CD4-positive, alpha-beta T cell (primary cell): ENCODE measurements at regions of chr1 and their contacts with region 1.

Region 1: DNA sequence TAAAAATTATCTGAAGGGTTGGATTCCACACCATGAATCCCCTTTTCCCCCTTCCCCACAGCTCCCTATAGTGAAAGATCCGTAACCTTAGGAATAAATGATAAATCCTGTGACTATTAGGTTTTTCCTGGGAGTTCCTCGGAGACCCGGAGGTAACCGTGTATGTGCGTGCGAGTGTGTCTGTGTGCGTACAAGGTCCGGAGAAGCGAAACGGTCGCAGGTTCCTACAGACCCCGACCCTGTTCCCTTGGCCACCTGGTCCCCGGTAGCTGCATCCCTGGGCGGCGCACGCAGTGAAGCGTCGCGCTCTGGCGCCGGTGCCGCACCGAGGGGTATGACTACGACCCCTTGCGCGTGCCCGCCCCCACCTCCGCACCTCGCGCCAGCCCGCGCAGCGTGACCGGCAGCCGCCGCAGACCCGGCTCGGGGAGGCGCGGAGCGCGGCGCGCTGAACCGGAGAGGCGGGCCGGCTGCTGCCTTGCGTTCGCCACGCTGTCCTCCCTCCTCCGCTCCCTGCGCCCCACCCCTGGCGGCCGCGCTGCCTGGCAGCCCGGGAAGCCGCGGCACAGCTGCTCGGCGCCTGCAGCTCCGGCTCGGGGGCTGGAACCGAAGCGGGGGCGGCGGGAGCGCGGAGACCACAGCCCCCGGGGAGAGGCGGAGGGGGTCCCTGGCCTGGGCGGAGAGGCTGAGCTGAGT is at the start of gene AK5:
- DNase-seq: peak; percentile 13 to 71 (median 45)
- ATAC-seq: peak; percentile 73
- H3K4me3 ChIP-seq: peak within 1 kb of the TSS; percentile 69
- H3K4me3 Mint-ChIP-seq: peak within 1 kb of the TSS; percentile 88
- H3K27ac ChIP-seq: peak within 1 kb of the TSS in 1 of 2 donors; percentile 51
- H3K27ac Mint-ChIP-seq: peak within 1 kb of the TSS; percentile 62
- H3K4me1 ChIP-seq: peaks cover 33% of the 10 kb centered on the region
- H3K4me1 Mint-ChIP-seq: peaks cover 55% of the 10 kb centered on the region
- H3K27me3 ChIP-seq: peaks cover 0 to 11% of the 10 kb centered on the region in 2 experiments
- H3K27me3 Mint-ChIP-seq: no peaks in the 10 kb centered on the region
- CTCF ChIP-seq: no peak
- total RNA-seq, gene AK5: 32.0 TPM

Region 2: DNA sequence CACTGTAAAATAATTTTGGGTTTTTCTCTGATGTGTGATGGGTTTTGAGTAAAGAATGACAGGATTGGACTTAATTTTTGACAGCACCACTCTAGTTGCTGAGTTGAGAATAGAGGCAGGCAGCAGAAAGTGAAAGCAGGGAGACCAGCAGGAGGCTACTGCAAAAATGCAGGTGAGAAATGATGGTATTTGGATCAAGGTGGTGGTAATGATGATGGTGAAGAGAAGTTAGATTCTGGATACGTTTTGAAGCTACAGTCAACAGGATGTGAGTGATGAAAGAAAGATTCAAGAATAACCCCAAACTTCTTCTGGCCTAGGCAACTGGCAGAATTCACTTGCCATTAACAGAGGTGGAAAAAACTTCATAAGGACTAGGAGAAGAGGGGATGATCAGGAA is 14.6 kb before region 1 on chr1:
- CTCF ChIA-PET with region 1: interaction called, 3 read pairs
- POLR2A ChIA-PET with region 1: interaction called, 11 read pairs
- intact Hi-C with region 1: no loop called
- DNase-seq: peak in 1 of 14 experiments; percentile 23
- ATAC-seq: peak; percentile 73
- H3K4me3 ChIP-seq: no peak overlapping the region
- H3K4me3 Mint-ChIP-seq: no peak overlapping the region
- H3K27ac ChIP-seq: no peak overlapping the region
- H3K27ac Mint-ChIP-seq: no peak overlapping the region
- H3K4me1 ChIP-seq: no peaks in the 10 kb centered on the region
- H3K4me1 Mint-ChIP-seq: no peaks in the 10 kb centered on the region
- H3K27me3 ChIP-seq: no peaks in the 10 kb centered on the region
- H3K27me3 Mint-ChIP-seq: no peaks in the 10 kb centered on the region
- CTCF ChIP-seq: no peak

Region 3: DNA sequence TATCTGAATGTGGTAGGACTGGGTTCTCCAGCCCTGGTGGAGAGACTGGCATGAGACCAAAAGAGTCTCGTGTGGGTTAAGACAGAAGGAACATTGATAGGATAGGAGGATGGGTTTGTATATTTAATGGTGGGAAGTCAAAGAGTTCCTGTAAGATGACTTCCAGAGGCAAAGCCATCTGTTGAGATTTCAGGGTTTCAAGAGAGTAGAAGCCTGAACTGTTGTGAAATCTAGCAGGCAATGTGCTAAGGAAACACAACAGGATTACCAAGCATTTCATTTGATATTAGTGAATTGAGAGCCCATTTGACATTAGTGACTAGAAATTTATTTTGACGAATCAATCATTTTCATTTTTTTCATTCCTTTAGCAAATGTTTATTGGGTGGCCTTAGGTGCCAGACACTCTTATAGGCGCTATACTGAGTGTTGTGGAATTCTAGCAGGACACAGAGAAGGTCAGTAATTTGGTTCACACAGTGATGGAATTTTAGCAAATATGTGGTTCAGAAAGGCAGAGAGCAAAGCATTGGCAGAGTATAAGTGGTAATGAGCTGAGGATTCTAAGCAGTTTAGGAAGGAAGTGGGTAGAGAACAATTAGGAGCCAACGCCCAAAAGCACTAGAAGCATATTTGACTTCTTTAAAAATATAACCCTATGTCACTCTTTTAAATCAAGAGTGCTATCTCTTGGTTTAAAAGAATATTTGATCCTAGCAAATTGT is 149.5 kb after region 1 on chr1:
- CTCF ChIA-PET with region 1: no interaction called
- POLR2A ChIA-PET with region 1: interaction called, 20 read pairs
- intact Hi-C with region 1: loop called in 1 of 2 experiments (anchors 5 kb)
- DNase-seq: peak in 4 of 14 experiments; percentile 21 to 81 (median 62)
- ATAC-seq: peak; percentile 94
- H3K4me3 ChIP-seq: peak overlapping the region; percentile 19
- H3K4me3 Mint-ChIP-seq: no peak overlapping the region
- H3K27ac ChIP-seq: peak overlapping the region; percentile 62 to 83
- H3K27ac Mint-ChIP-seq: no peak overlapping the region
- H3K4me1 ChIP-seq: peaks cover 37% of the 10 kb centered on the region
- H3K4me1 Mint-ChIP-seq: peaks cover 18% of the 10 kb centered on the region
- H3K27me3 ChIP-seq: no peaks in the 10 kb centered on the region
- H3K27me3 Mint-ChIP-seq: no peaks in the 10 kb centered on the region
- CTCF ChIP-seq: no peak

Region 4: GRCh38 chr1:77557053-77557452 is 275.4 kb after region 1 on chr1:
- CTCF ChIA-PET with region 1: no interaction called
- POLR2A ChIA-PET with region 1: no interaction called
- intact Hi-C with region 1: no loop called
- DNase-seq: no peak
- ATAC-seq: no peak
- H3K4me3 ChIP-seq: no peak overlapping the region
- H3K4me3 Mint-ChIP-seq: no peak overlapping the region
- H3K27ac ChIP-seq: no peak overlapping the region
- H3K27ac Mint-ChIP-seq: no peak overlapping the region
- H3K4me1 ChIP-seq: no peaks in the 10 kb centered on the region
- H3K4me1 Mint-ChIP-seq: peaks cover 20% of the 10 kb centered on the region
- H3K27me3 ChIP-seq: no peaks in the 10 kb centered on the region
- H3K27me3 Mint-ChIP-seq: no peaks in the 10 kb centered on the region
- CTCF ChIP-seq: no peak

Region 5: DNA sequence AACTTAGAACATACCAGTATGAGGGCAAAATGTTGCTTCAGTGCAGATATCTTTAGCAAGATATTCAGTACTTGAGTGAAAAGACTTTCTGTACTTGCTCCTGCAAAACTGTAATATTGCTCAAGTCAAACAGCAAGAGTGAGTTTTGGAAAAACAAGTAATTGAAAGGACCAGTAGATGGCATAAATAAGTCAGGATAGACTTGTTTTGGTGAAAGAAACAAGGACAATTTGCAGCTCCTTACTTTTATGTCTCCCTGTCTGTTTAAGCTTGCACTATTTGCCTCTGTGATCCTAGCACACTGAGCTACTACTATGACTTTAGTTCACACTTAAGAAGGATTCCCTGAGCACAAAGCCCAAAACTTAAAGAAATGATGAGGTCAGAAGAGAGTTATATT is 1407.1 kb after region 1 on chr1:
- CTCF ChIA-PET with region 1: no interaction called
- POLR2A ChIA-PET with region 1: no interaction called
- intact Hi-C with region 1: no loop called
- DNase-seq: no peak
- ATAC-seq: no peak
- H3K4me3 ChIP-seq: no peak overlapping the region
- H3K4me3 Mint-ChIP-seq: no peak overlapping the region
- H3K27ac ChIP-seq: no peak overlapping the region
- H3K27ac Mint-ChIP-seq: no peak overlapping the region
- H3K4me1 ChIP-seq: no peaks in the 10 kb centered on the region
- H3K4me1 Mint-ChIP-seq: no peaks in the 10 kb centered on the region
- H3K27me3 ChIP-seq: no peaks in the 10 kb centered on the region
- H3K27me3 Mint-ChIP-seq: peaks cover 24% of the 10 kb centered on the region
- CTCF ChIP-seq: no peak